ENCODE measurements at regions of chr1 and their contacts with region 1.

Region 1: DNA sequence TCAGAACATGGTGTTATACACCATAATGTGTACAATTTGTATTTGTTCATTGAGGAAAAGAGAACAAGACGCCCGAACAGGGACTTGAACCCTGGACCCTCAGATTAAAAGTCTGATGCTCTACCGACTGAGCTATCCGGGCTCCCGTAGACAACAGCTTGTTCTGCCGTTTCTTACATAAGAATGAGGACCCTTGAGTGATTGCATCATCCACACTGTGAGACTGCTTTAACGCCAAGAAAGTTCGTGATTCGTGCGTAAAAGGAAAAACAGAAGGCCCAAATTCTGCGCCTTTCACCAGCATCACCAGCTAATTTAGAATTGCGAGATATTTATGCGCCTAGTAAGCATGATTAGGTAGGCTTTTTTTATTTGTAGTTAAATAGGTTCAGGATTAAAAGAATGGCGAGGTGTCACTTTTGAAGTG is 9.2 kb upstream of the MDM4 start:
- DNase-seq: peak; percentile 75
- H3K4me3 ChIP-seq: peak overlapping the region; percentile 37
- H3K27me3 ChIP-seq: no peaks in the 10 kb centered on the region
- CTCF ChIP-seq: no peak

Region 2: DNA sequence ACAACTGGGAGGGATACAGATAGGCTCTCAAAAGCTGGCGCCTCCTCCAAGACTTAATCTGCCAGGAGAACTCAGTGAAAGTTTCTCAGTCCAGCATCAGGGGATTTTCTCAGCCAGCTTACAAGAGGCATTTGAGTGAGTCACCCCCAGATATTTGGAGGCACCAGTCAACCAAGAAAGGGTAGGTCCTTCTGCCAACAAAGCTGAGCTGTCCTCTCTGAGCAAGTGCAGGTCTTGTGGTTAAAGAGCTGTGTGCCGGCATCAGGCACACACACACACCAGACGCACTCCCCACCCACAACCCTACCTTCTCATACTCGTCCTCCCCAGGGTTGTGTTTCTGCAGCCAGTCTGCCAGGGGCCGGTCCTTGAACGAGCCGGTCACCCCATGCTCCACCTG is 68.3 kb before region 1 on chr1:
- CTCF ChIA-PET with region 1: interaction called, 194 read pairs
- POLR2A ChIA-PET with region 1: no interaction called
- DNase-seq: peak; percentile 94
- H3K4me3 ChIP-seq: no peak overlapping the region
- H3K27me3 ChIP-seq: no peaks in the 10 kb centered on the region
- CTCF ChIP-seq: no peak

Region 3: DNA sequence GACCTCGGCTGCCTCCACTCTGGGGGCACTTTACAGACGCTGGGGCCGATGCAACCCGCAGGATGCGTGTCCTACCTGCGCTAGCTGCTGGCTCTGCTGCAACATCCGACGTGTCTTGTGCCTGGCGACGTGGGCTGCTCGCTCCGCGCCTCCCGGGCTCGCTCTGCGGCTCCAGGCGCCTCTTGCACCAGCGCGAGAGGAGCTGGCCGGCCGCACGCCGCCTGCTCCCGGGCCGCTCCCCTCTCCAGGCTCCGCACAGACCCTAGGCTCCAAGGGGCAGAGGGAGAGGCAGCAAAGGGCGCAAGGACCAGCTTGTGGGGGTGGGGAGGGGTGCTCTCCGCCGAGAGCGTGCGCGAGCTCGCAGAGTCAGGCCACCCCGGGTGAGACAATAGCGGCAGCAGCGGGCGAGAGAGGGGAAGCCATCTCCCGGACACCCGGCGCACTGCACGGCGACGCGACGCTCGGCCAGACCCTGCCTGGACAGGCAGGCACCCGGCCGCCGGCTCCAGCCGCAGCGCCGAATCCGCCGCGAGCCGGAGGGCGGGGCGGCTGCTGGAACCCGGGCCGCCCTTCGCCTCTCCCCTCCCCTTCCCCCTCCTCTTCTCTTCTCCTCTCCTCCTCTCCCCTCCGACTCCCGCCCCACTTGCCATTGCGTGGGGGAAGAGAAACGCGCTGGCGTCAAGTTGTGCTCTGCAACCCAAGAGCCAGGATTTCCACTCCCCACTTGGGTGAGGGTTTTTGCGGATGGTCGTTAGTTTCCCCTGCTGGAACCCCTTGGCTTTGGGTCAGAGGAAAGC is 12.5 kb before region 1 on chr1 and contains the start of gene PIK3C2B:
- CTCF ChIA-PET with region 1: interaction called, 34 read pairs
- POLR2A ChIA-PET with region 1: no interaction called
- DNase-seq: no peak
- H3K4me3 ChIP-seq: peak within 1 kb of the TSS; percentile 64
- H3K27me3 ChIP-seq: peaks cover 3% of the 10 kb centered on the region
- CTCF ChIP-seq: peak; percentile 53
- polyA plus RNA-seq, gene PIK3C2B: 5.1 and 7.9 TPM in 2 replicates